PC-3 (cell line): ENCODE measurements at regions of chr11 and their contacts with region 1.

Region 1: DNA sequence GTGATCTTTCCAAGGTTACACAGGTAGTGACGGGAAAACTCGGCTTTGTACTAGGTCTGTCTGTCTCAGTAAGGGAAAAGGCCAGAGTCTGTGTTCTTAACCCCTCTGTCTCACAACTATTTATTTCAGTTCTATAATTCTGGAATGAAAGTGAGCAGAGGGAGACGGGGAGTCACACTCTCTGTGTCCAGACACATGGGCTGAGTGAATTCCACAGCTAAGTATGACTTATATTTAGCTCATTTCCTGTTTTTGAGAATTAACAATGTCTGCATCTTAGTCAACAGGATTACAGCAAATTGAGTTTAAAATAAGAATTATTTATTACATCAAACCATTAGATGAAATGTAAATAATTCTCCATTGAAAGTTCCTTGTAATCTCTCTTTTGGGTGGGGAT is 62.5 kb upstream of the OR4B1 start:
- DNase-seq: peak; percentile 21
- ATAC-seq: peak; percentile 62
- H3K4me3 ChIP-seq: no peak overlapping the region
- H3K27ac ChIP-seq: peak overlapping the region; percentile 39; the same call in 1 of the 2 replicates
- H3K4me1 ChIP-seq: peaks cover 18% of the 10 kb centered on the region
- H3K27me3 ChIP-seq: no peaks in the 10 kb centered on the region
- CTCF ChIP-seq: no peak

Region 2: DNA sequence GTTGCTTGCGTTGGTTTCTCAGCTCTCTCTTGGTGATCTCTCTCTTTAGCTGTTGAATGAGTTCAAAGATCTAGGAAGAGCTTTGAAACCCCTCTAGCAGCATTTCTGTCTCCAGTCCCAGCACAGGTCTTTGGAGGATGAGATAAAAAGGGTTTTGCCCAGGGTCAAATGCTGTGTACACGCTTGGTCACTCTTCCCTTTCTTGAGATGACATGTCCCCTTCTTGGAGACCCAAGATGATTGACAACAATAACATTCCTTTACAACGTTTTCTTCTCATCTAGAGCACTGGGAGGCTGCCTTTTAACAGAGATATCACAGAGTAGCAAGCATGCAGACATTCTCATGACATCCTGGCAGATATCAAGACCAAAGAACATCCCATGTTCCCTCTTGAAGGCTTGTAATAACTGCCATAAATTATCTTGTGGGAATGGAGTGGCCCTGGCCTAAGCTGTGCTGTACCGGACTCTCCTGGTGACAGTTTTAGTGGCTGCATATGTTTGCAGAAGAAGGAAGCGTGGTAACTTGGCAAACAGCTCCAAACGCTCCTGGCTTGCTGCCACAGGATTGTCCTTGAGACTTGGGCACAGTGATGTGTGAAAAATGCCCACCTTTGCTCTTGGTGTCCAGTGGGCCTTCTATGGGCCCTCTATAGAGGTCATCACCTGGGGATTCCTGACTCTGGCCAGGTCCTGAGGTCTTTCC is 66.0 kb before region 1 on chr11:
- CTCF ChIA-PET with region 1: no interaction called
- POLR2A ChIA-PET with region 1: no interaction called
- intact Hi-C with region 1: no loop called
- DNase-seq: no peak
- ATAC-seq: no peak
- H3K4me3 ChIP-seq: no peak overlapping the region
- H3K27ac ChIP-seq: no peak overlapping the region
- H3K4me1 ChIP-seq: peaks cover 20% of the 10 kb centered on the region
- H3K27me3 ChIP-seq: no peaks in the 10 kb centered on the region
- CTCF ChIP-seq: no peak

Region 3: GRCh38 chr11:48116437-48117228 is 37.5 kb before region 1 on chr11:
- CTCF ChIA-PET with region 1: no interaction called
- POLR2A ChIA-PET with region 1: no interaction called
- intact Hi-C with region 1: no loop called
- DNase-seq: no peak
- ATAC-seq: peak; percentile 60
- H3K4me3 ChIP-seq: no peak overlapping the region
- H3K27ac ChIP-seq: no peak overlapping the region
- H3K4me1 ChIP-seq: no peaks in the 10 kb centered on the region
- H3K27me3 ChIP-seq: no peaks in the 10 kb centered on the region
- CTCF ChIP-seq: peak; percentile 56

Region 4: DNA sequence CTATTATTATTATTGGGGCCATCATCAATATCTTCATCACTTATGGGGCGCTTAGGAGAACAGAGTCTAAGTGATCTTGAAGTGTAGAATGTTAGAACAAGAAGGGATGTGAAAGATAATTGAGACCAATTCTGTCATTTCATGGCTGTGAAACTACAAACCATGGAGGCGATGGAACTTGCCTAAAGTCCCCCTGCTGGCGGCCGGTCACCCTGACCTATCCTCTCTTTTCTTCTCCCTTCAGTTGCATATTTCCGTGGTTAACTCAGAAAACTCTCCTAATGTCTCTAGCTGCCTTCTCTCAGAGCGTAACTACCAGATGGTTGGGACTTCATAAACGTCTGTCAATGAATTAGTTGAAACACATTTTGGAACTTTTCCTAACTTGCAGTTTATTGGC is 55.9 kb after region 1 on chr11:
- CTCF ChIA-PET with region 1: no interaction called
- POLR2A ChIA-PET with region 1: interaction called, 20 read pairs
- intact Hi-C with region 1: no loop called
- DNase-seq: peak; percentile 35
- ATAC-seq: peak; percentile 55
- H3K4me3 ChIP-seq: no peak overlapping the region
- H3K27ac ChIP-seq: no peak overlapping the region
- H3K4me1 ChIP-seq: no peaks in the 10 kb centered on the region
- H3K27me3 ChIP-seq: no peaks in the 10 kb centered on the region
- CTCF ChIP-seq: peak; percentile 51